OCI-LY7 (cell line): ENCODE measurements at regions of chr11 and their contacts with region 1.

Region 1: DNA sequence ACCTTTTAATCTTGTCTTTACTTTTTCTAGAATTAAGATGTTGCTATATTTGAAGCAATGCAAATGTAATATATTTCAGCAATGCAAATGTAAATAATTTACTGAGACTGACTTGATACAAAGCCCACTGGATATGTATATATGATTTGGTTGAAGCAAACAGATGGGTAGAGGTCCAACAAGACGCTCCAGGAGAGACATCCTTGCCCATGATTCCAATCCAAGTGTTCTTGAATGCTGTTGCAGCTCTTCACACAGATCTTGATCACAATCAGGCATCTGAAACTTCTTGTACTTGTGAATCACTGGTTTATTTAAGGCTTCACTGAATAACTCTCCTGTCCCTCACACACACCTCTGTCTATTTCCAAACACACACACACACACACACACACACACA is 507.0 kb downstream of the LRRC4C start:
- DNase-seq: no peak
- H3K4me3 ChIP-seq: no peak overlapping the region
- H3K27ac ChIP-seq: no peak overlapping the region
- H3K4me1 ChIP-seq: no peaks in the 10 kb centered on the region
- CTCF ChIP-seq: no peak

Region 2: GRCh38 chr11:42311514-42311913 is 1359.0 kb after region 1 on chr11:
- CTCF ChIA-PET with region 1: interaction called, 10 read pairs
- POLR2A ChIA-PET with region 1: no interaction called
- intact Hi-C with region 1: no loop called
- DNase-seq: no peak
- H3K4me3 ChIP-seq: no peak overlapping the region
- H3K27ac ChIP-seq: no peak overlapping the region
- H3K4me1 ChIP-seq: no peaks in the 10 kb centered on the region
- CTCF ChIP-seq: no peak